Ovary (tissue), 10 donors: ENCODE measurements at regions of chr3 and their contacts with region 1.

Region 1: GRCh38 chr3:110149763-110150162 is 812.4 kb upstream of the DPPA4 start:
- DNase-seq: no peak
- H3K4me3 ChIP-seq: no peak overlapping the region
- H3K27ac ChIP-seq: no peak overlapping the region
- H3K4me1 ChIP-seq: no peaks in the 10 kb centered on the region
- H3K27me3 ChIP-seq: no peaks in the 10 kb centered on the region
- CTCF ChIP-seq: no peak
- EP300 ChIP-seq: no peak
- POLR2A ChIP-seq: no peak

Region 2: GRCh38 chr3:110133971-110134370 is 15.8 kb before region 1 on chr3:
- intact Hi-C with region 1: loop called in 1 of 4 experiments (anchors 2 kb)
- DNase-seq: no peak
- H3K4me3 ChIP-seq: no peak overlapping the region
- H3K27ac ChIP-seq: no peak overlapping the region
- H3K4me1 ChIP-seq: no peaks in the 10 kb centered on the region
- H3K27me3 ChIP-seq: no peaks in the 10 kb centered on the region
- CTCF ChIP-seq: no peak
- EP300 ChIP-seq: no peak
- POLR2A ChIP-seq: no peak